PC-3 (cell line): ENCODE measurements at regions of chr5 and their contacts with region 1.

Region 1: GRCh38 chr5:104347119-104347708 is 784.6 kb upstream of the NUDT12 start:
- DNase-seq: peak; percentile 61
- ATAC-seq: no peak
- H3K4me3 ChIP-seq: no peak overlapping the region
- H3K27ac ChIP-seq: no peak overlapping the region
- H3K4me1 ChIP-seq: peaks cover 19% of the 10 kb centered on the region
- H3K27me3 ChIP-seq: no peaks in the 10 kb centered on the region
- CTCF ChIP-seq: peak; percentile 87

Region 2: DNA sequence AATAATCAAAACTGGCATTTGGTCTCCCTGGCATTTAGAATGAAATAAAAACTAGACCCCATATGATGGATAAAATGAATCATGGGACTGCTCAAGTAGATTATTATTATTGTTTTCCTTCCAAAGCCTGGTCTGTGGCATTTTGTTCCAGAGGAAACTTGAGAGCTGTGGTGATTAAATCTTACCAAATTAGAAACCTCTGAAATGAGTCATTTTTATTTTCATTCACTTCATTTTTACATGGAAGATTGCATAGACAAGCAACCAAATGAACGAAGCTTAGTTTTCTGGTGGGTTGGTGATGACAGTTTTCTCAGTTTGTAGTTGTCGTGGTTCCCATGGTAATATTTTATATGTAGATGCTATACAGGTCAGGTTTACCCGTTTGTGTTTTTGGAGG is 1568.7 kb before region 1 on chr5:
- CTCF ChIA-PET with region 1: no interaction called
- POLR2A ChIA-PET with region 1: no interaction called
- intact Hi-C with region 1: loop called (anchors 10 kb)
- DNase-seq: peak; percentile 64
- ATAC-seq: peak; percentile 53
- H3K4me3 ChIP-seq: no peak overlapping the region
- H3K27ac ChIP-seq: peak overlapping the region; percentile 3; the same call in 1 of the 2 replicates
- H3K4me1 ChIP-seq: peaks cover 27% of the 10 kb centered on the region
- H3K27me3 ChIP-seq: no peaks in the 10 kb centered on the region
- CTCF ChIP-seq: no peak

Region 3: GRCh38 chr5:103582364-103582763 is 764.9 kb before region 1 on chr5:
- CTCF ChIA-PET with region 1: no interaction called
- POLR2A ChIA-PET with region 1: no interaction called
- intact Hi-C with region 1: loop called (anchors 1 kb)
- DNase-seq: peak; percentile 73
- ATAC-seq: peak; percentile 68
- H3K4me3 ChIP-seq: no peak overlapping the region
- H3K27ac ChIP-seq: no peak overlapping the region
- H3K4me1 ChIP-seq: no peaks in the 10 kb centered on the region
- H3K27me3 ChIP-seq: no peaks in the 10 kb centered on the region
- CTCF ChIP-seq: peak; percentile 89

Region 4: GRCh38 chr5:104088876-104089778 is 258.1 kb before region 1 on chr5:
- CTCF ChIA-PET with region 1: no interaction called
- POLR2A ChIA-PET with region 1: no interaction called
- intact Hi-C with region 1: loop called (anchors 10 kb)
- DNase-seq: peak; percentile 85
- ATAC-seq: peak; percentile 95
- H3K4me3 ChIP-seq: peak overlapping the region; percentile 16; the same call in 1 of the 2 replicates
- H3K27ac ChIP-seq: peak overlapping the region; percentile 67
- H3K4me1 ChIP-seq: peaks cover 13% of the 10 kb centered on the region
- H3K27me3 ChIP-seq: no peaks in the 10 kb centered on the region
- CTCF ChIP-seq: no peak

Region 5: DNA sequence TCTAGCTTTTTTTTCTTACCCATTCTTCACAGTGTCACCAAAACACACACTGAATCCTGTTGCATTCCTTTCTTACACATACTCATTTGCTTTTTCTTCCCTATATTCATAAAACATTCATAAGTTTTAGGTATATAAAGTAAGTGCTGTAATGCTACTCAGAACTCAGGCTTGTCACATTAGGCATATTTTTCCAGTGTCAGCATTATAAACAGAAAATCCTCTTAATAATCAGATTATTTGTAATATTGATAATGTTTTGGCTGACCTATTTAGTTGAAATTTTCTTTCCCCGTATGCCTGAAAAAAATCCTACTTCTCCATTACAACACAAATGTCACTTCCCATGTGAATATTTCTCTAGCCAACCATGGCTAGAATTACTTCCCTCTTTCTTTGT is 41.6 kb before region 1 on chr5:
- CTCF ChIA-PET with region 1: no interaction called
- POLR2A ChIA-PET with region 1: no interaction called
- intact Hi-C with region 1: no loop called
- DNase-seq: no peak
- ATAC-seq: no peak
- H3K4me3 ChIP-seq: no peak overlapping the region
- H3K27ac ChIP-seq: no peak overlapping the region
- H3K4me1 ChIP-seq: peaks cover under 1% of the 10 kb centered on the region; the same call in 1 of the 2 replicates
- H3K27me3 ChIP-seq: no peaks in the 10 kb centered on the region
- CTCF ChIP-seq: no peak

Region 6: GRCh38 chr5:104702212-104702611 is 355.0 kb after region 1 on chr5:
- CTCF ChIA-PET with region 1: no interaction called
- POLR2A ChIA-PET with region 1: no interaction called
- intact Hi-C with region 1: loop called (anchors 1 kb)
- DNase-seq: peak; percentile 95
- ATAC-seq: peak; percentile 77
- H3K4me3 ChIP-seq: 0 out of 2 replicates have a peak overlapping the region, but pooled peaks have one; percentile 12
- H3K27ac ChIP-seq: peak overlapping the region; percentile 88
- H3K4me1 ChIP-seq: peaks cover 35% of the 10 kb centered on the region
- H3K27me3 ChIP-seq: no peaks in the 10 kb centered on the region
- CTCF ChIP-seq: no peak

Region 7: GRCh38 chr5:104913841-104914281 is 566.6 kb after region 1 on chr5:
- CTCF ChIA-PET with region 1: no interaction called
- POLR2A ChIA-PET with region 1: no interaction called
- intact Hi-C with region 1: loop called (anchors 1 kb)
- DNase-seq: no peak
- ATAC-seq: no peak
- H3K4me3 ChIP-seq: no peak overlapping the region
- H3K27ac ChIP-seq: no peak overlapping the region
- H3K4me1 ChIP-seq: peaks cover 38% of the 10 kb centered on the region
- H3K27me3 ChIP-seq: no peaks in the 10 kb centered on the region
- CTCF ChIP-seq: no peak

Region 8: GRCh38 chr5:106121972-106122605 is 1774.9 kb after region 1 on chr5:
- CTCF ChIA-PET with region 1: no interaction called
- POLR2A ChIA-PET with region 1: no interaction called
- intact Hi-C with region 1: loop called (anchors 10 kb)
- DNase-seq: peak; percentile 60
- ATAC-seq: peak; percentile 97
- H3K4me3 ChIP-seq: no peak overlapping the region
- H3K27ac ChIP-seq: no peak overlapping the region
- H3K4me1 ChIP-seq: no peaks in the 10 kb centered on the region
- H3K27me3 ChIP-seq: no peaks in the 10 kb centered on the region
- CTCF ChIP-seq: peak; percentile 94